Activated T-helper 2 cell treated with anti-CD3 and anti-CD28 coated beads, Interferon-gamma antibody, Interleukin-2, Interleukin-4, amounts not matched to agents 10 μg/mL and 5 μg/mL and 100 μg/mL, durations not matched to agents 14 hours and 24 hours and 36 hours (primary cell): ENCODE measurements at regions of chr3 and their contacts with region 1.

Region 1: DNA sequence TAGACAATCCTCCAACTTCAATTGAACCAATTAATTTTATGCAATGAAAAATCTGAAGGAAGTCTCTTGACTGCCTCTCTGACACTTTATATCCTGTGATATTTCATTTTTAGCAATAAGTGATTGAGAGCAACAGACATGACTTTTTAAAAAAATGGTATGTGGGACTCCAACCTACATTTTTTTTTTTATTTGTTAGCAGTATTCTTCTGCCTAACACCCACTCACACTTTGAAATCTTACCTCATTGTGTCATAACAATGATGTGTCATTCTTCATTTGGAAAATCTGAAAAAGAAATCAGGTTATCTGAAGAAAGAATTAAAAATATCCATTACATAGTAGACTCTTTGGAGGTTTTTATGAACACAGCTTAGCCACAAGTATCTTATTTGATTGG is 541.3 kb upstream of the KCNMB2 start:
- DNase-seq: no peak
- H3K4me3 Mint-ChIP-seq: no peak overlapping the region
- H3K27ac Mint-ChIP-seq: peak overlapping the region; percentile 84
- H3K4me1 Mint-ChIP-seq: peaks cover 23% of the 10 kb centered on the region
- H3K27me3 Mint-ChIP-seq: no peaks in the 10 kb centered on the region

Region 2: GRCh38 chr3:177050501-177051237 is 944.3 kb before region 1 on chr3:
- intact Hi-C with region 1: loop called (anchors 10 kb)
- DNase-seq: no peak
- H3K4me3 Mint-ChIP-seq: no peak overlapping the region
- H3K27ac Mint-ChIP-seq: no peak overlapping the region
- H3K4me1 Mint-ChIP-seq: peaks cover 14% of the 10 kb centered on the region
- H3K27me3 Mint-ChIP-seq: no peaks in the 10 kb centered on the region

Region 3: DNA sequence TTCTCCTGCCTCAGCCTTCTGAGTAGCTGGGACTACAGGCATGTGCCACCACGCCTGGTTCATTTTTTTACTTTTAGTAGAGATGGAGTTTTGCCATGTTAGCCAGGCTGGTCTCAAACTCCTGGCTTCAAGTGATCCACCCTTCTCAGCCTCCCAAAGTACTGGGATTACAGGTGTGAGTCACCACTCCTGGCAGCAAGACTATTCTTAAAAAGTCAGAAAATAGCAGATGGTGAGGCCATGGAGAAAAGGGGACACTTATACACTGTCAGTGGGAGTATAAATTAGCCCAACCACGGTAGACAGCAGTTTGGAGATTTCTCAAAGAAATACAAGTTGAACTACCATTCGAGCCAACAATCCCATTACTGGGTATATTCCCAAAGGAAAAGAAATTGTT is 194.4 kb before region 1 on chr3:
- intact Hi-C with region 1: loop called (anchors 2 kb)
- DNase-seq: no peak
- H3K4me3 Mint-ChIP-seq: no peak overlapping the region
- H3K27ac Mint-ChIP-seq: no peak overlapping the region
- H3K4me1 Mint-ChIP-seq: peaks cover 20% of the 10 kb centered on the region
- H3K27me3 Mint-ChIP-seq: peaks cover 3% of the 10 kb centered on the region

Region 4: DNA sequence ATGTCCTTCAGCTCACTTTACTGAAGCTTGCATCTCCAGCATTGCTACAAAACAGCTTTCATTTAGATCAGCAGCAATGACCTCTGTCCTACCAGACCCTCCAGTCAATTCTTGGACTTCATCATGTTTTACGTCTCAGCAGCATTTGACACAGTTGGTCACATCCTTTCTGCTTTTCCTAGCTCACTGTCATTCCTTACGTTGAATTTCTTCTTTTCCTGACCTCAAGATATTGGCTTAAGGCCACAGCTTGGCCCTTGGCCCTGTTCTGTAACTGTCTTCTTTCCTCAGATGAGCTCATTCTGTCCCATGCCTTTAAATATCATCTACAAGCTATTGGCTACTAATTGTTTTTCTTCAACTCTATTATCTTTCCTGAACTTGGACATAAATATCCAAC is 35.0 kb before region 1 on chr3:
- intact Hi-C with region 1: no loop called
- DNase-seq: no peak
- H3K4me3 Mint-ChIP-seq: no peak overlapping the region
- H3K27ac Mint-ChIP-seq: no peak overlapping the region
- H3K4me1 Mint-ChIP-seq: no peaks in the 10 kb centered on the region
- H3K27me3 Mint-ChIP-seq: no peaks in the 10 kb centered on the region

Region 5: GRCh38 chr3:177977381-177978158 is 17.4 kb before region 1 on chr3:
- intact Hi-C with region 1: loop called (anchors 2 kb)
- DNase-seq: no peak
- H3K4me3 Mint-ChIP-seq: no peak overlapping the region
- H3K27ac Mint-ChIP-seq: no peak overlapping the region
- H3K4me1 Mint-ChIP-seq: peaks cover 9% of the 10 kb centered on the region
- H3K27me3 Mint-ChIP-seq: no peaks in the 10 kb centered on the region

Region 6: GRCh38 chr3:178588628-178589027 is 593.7 kb after region 1 on chr3:
- intact Hi-C with region 1: no loop called
- DNase-seq: no peak
- H3K4me3 Mint-ChIP-seq: no peak overlapping the region
- H3K27ac Mint-ChIP-seq: no peak overlapping the region
- H3K4me1 Mint-ChIP-seq: no peaks in the 10 kb centered on the region
- H3K27me3 Mint-ChIP-seq: no peaks in the 10 kb centered on the region